GM10248 (cell line): ENCODE measurements at regions of chr1 and their contacts with region 1.

Region 1: DNA sequence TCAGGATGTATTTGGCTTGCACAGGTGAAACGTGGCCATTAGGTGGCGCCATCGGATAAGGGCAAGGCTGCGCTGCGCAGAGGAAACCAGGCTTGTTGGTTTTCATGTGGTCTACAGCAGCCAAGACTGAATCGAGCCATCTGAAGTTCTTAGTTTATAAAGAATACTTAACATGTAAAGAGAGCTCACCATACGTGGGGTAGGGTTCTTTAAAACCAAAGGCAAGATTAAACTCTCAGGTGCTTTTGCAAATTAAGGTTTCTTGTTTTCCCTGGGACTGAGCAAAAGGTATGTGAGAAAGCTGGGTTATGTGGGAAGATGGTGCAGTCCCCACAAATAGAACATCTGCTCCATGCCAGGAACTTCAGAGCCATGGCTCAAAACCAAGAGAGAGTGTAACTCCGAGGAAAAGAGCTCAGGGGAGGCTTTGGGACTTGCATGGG is 9.3 kb downstream of the MASP2 start:
- DNase-seq: peak; percentile 88
- CTCF ChIP-seq: peak; percentile 98

Region 2: DNA sequence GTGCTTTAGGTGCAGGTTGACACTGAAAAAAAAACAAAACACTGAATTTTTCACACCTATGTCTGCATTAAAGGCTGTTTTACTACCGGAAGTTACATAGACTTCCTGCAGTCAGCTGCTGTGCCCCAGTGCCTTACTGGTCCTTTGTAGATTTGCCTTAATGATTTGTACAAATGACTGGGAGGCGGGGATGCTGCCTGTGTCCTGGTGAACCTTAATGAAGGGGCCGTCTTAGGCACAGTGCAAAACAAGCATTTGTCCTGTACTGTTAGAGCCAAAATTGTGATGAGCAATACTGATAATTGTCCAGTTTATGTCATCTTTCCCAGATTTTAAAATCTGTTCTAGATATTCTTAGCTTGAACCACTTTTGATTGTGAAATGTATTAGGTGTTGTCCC is 729.8 kb before region 1 on chr1:
- CTCF ChIA-PET with region 1: no interaction called
- POLR2A ChIA-PET with region 1: no interaction called
- DNase-seq: no peak
- CTCF ChIP-seq: no peak

Region 3: DNA sequence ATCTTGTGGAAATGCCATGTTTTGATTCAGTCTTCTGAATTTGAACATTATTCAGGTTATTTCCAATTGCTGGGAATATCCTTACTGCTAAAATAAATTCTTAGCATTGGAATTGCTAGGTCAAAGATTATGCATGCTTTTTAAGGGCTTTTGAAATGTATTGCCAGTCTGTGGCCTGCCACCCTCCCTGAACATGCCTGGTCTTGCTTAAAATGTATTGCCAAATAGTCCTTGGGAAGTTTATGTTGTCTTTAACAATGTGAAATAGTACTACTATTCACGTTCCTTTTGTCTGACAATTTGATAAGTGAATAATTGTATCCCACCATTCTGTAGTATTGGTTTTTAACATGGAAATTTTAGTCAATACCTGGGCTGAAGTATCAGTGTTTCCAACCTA is 11.7 kb before region 1 on chr1:
- CTCF ChIA-PET with region 1: interaction called, 16 read pairs
- POLR2A ChIA-PET with region 1: no interaction called
- DNase-seq: no peak
- CTCF ChIP-seq: no peak

Region 4: DNA sequence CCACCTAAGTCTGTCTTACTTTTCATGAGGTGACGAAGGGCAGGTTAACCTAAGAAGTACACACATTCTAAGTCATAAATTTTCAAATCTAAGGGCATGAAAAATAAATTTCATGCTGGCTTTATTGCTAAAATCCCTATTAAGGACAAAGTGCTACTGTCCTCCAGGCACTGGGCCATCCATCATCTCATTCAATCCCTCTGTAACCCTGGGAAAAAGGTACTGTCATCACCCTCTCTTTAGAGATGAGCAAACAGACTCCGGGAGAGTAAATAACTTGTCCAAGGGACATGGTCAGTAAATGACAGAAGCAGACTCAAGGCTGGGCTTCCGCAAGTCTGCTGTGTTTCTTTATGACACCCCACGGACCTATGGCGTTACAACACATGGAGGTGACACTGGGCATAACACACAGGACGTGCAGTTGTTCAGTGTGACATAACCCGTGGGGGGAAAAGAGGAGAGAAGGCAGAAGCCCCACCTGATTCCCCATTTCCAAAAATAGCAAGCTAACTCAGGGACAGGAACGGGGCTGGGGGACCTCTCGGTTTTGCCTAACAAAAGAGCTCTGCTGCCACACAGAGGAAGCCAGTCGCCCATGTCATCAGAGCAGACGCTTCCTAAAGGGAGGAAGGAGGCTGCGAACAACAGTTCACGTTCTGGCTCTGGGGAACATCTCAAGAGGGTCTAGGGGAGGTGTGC is 34.6 kb after region 1 on chr1:
- CTCF ChIA-PET with region 1: interaction called, 52 read pairs
- POLR2A ChIA-PET with region 1: interaction called, 4 read pairs
- DNase-seq: peak; percentile 64
- CTCF ChIP-seq: peak; percentile 43

Region 5: DNA sequence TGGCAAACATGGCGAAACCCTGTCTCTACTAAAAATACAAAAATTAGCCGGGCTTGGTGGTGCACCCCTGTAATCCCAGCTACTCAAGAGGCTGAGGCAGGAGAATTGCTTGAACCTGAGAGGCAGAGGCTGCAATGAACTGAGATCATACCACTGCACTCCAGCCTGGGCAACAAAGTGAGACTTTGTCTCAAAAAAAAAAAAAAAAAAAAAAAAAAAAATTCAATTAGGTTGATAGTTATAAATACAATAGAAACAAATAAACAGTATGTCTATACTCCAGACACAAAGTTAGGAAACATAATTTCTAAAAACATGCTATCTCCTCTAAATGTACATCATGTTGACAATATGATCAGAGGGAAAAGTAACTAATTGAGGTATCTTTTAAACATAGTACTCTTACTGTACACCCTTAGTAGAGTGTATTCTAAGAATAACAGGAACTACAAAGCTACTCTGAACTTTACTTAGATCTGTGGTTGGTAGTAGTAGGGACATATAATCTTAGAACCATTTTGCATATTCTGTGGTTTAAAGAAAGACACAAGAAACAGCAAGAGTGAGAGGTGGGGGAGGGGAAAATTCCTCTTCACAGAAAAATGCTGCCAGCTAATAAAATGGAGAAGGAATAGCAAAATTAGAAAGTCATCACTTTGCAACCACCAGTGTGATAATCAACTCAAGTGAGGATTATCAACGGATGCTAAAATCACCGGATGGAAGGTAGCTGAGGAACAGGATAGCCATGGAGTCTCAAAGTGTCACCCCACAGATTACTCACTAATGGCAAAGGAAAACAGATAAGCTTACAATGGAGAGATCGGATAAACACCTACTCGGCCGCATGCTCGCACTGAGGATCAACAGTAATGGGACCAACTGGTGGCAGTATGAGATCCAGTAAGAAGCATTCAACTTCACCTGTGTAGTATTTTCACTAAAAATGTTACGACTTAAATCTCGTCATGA is 189.6 kb after region 1 on chr1:
- CTCF ChIA-PET with region 1: interaction called, 17 read pairs
- POLR2A ChIA-PET with region 1: no interaction called
- DNase-seq: peak; percentile 39
- CTCF ChIP-seq: no peak

Region 6: GRCh38 chr1:11364170-11364569 is 326.4 kb after region 1 on chr1:
- CTCF ChIA-PET with region 1: interaction called, 12 read pairs
- POLR2A ChIA-PET with region 1: no interaction called
- DNase-seq: no peak
- CTCF ChIP-seq: peak; percentile 37

Region 7: GRCh38 chr1:11707621-11708276 is 670.0 kb after region 1 on chr1:
- CTCF ChIA-PET with region 1: interaction called, 12 read pairs
- POLR2A ChIA-PET with region 1: no interaction called
- DNase-seq: no peak
- CTCF ChIP-seq: no peak